ENCODE measurements at regions of chr13 and their contacts with region 1.

Region 1: GRCh38 chr13:69565334-69565733 is 542.3 kb upstream of the ATXN8OS start:
- DNase-seq: peak; percentile 64
- H3K4me3 ChIP-seq: no peak overlapping the region
- CTCF ChIP-seq: peak; percentile 49

Region 2: GRCh38 chr13:69660155-69660554 is 94.8 kb after region 1 on chr13:
- in situ Hi-C with region 1: no loop called
- DNase-seq: no peak
- H3K4me3 ChIP-seq: no peak overlapping the region
- CTCF ChIP-seq: no peak

Region 3: GRCh38 chr13:70585109-70585508 is 1019.8 kb after region 1 on chr13:
- in situ Hi-C with region 1: loop called (anchors 25 kb)
- DNase-seq: no peak
- H3K4me3 ChIP-seq: no peak overlapping the region
- CTCF ChIP-seq: no peak